GM10248 (cell line): ENCODE measurements at regions of chr16 and their contacts with region 1.

Region 1: GRCh38 chr16:10737068-10737625 is 6.5 kb upstream of the NUBP1 start:
- DNase-seq: peak; percentile 81
- CTCF ChIP-seq: peak; percentile 84

Region 2: DNA sequence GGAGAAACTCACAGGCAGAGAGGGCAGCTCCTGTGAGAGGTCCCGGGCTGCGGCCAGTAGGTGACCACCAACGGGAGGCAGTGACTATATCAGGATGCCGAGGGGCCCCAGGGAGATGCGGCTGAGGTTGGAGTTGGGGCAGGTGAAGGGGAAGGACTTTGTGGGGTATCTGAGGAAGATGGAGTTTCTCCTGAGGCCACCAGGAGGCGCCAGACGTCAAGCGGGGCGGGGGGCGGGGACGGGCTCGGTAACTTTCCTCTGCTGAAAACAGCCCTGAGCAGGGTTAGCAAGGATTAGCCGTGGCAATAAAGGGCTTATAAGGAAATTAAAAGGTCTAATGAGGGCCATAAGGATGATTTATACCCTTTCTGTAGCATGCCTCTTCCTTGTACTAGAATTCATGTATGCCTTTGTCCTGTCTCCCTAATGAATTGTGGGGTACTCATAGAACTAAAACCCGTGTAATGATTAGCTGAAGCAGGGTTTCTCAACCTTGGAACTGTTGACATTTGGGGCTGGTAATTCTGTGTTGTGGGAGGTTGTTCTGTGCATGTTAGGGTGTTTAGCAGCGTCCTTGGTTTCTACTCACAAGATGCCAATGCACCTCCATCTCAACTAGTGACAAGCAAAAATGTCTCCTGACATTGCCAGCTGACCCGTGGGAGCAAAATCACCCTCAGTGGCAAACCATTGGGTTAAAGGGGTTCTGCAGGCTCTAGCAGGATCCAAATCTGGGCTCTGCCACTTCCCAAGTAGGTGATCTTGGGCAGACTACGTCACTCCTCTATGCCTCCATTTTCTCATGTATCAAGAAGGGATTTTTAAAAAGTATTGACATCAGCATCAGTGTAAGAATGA is 480.1 kb before region 1 on chr16:
- CTCF ChIA-PET with region 1: interaction called, 16 read pairs
- POLR2A ChIA-PET with region 1: no interaction called
- DNase-seq: peak; percentile 80
- CTCF ChIP-seq: peak; percentile 42

Region 3: GRCh38 chr16:10521681-10522274 is 215.4 kb before region 1 on chr16:
- CTCF ChIA-PET with region 1: interaction called, 101 read pairs
- POLR2A ChIA-PET with region 1: no interaction called
- DNase-seq: peak; percentile 67
- CTCF ChIP-seq: peak; percentile 60

Region 4: GRCh38 chr16:10699756-10700155 is 37.4 kb before region 1 on chr16:
- CTCF ChIA-PET with region 1: no interaction called
- POLR2A ChIA-PET with region 1: no interaction called
- DNase-seq: no peak
- CTCF ChIP-seq: no peak